ENCODE measurements at regions of chr7 and their contacts with region 1.

Region 1: DNA sequence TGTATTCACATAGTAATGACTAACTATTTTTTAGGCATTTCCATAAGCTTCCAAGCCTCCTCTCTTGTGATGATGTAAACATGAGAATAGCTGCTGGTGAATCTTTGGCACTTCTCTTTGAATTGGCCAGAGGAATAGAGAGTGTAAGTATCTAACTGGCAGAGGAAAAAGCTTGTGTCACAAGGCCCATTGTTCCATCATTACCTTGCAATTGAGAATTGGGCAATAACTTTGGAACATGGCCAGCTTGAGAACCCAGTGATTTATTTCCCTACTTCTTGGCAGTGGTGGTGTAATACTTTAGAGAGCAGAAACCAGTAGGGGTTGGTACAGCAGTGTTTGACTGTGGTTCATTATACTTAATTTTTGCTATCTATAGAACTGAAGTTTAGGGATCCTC is 12.0 kb downstream of the IFRD1 start:
- DNase-seq: peak; percentile 85 to 88 (median 85)
- H3K4me3 ChIP-seq: no peak overlapping the region
- H3K27ac ChIP-seq: no peak overlapping the region
- H3K4me1 ChIP-seq: peaks cover 0 to 9% (median 0%) of the 10 kb centered on the region in 4 experiments
- H3K27me3 ChIP-seq: no peaks in the 10 kb centered on the region

Region 2: DNA sequence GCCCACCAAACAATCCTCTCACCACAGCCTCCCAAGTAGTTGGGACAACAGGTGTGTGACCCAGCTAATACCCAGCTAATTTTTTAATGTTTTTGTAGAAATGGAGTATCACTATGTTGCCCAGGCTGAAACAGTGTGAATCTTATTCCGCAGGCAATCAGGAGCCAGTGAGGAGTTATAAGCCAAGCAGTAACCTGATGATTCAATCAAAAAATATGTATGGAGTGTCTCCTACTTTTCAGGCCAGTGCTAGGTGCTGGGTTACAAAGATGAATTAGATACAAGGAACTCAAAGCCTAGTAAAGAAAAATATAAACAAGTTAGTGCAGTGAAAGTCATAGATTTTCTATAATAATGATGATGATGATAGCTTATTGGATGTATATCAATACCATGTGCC is 25.2 kb before region 1 on chr7:
- CTCF ChIA-PET with region 1: no interaction called
- POLR2A ChIA-PET with region 1: no interaction called
- DNase-seq: no peak
- H3K4me3 ChIP-seq: no peak overlapping the region
- H3K27ac ChIP-seq: no peak overlapping the region
- H3K4me1 ChIP-seq: peaks cover 0 to 2% (median 0%) of the 10 kb centered on the region in 4 experiments
- H3K27me3 ChIP-seq: no peaks in the 10 kb centered on the region

Region 3: DNA sequence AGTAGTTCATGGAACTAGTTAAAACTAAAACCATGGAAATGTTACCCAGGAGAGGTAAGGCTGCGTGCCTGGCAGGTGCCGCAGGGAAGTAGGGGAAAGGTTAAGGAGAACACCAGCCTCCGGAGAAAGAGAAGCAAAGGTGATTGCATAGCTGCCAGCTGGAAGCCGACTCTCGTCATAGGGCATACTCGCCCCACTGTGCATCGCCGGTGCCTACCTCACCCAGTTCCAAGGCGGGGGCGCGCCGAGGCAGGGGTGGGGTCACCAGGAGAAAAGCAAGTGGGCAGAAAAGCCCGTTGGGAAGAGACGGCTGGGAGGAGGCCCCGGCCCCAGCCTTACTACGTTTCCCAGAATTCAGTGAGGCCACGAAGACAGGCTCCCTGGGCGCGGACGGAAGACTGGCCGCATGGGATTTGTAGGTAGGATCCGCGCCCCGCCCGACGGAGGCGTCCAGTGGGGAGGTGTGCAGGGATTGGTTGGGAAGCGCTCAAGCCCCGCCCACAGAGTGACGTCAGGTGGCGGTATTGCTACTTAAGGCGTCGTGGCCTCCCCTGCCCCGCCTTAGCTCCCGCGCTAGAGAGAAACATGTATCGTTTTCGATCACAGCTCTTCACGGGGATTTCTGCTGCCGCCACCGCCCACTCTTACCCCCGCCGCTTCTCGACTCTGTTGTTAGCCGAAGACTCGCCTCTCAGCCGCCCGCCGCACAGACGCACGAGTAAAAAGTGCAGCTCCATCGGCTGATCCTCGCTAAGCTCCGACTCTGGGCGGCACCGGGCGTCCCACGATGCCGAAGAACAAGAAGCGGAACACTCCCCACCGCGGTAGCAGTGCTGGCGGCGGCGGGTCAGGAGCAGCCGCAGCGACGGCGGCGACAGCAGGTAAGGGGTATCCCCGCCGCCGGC is 12.1 kb before region 1 on chr7 and contains the start of gene IFRD1:
- CTCF ChIA-PET with region 1: interaction called, 32 read pairs
- POLR2A ChIA-PET with region 1: interaction called, 10 read pairs
- DNase-seq: peak; percentile 97 to 99 (median 98)
- H3K4me3 ChIP-seq: peak within 1 kb of the TSS; percentile 93 to 100 (median 97)
- H3K27ac ChIP-seq: peak within 1 kb of the TSS; percentile 92 to 96
- H3K4me1 ChIP-seq: peaks cover 14 to 30% (median 23%) of the 10 kb centered on the region in 4 experiments
- H3K27me3 ChIP-seq: no peaks in the 10 kb centered on the region

Region 4: DNA sequence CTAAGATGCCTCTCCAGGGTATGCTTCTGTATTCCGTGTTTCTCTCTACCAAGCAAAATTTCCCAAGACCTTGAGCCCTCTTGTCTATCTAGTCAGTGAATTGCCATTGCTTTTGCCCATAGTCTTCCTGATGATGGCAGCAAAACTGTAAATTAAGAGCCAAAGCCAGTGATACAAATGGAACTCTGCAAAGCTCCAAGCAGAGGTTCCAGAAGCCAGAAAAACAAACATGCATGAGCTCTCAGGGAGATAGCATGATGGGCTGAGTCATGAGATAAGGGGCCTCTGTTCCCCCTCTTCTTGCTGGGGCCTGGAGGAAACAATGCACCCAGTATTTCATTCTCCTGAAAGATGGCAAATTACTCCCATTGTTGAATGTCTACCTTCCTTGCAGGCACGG is 43.3 kb after region 1 on chr7:
- CTCF ChIA-PET with region 1: no interaction called
- POLR2A ChIA-PET with region 1: no interaction called
- DNase-seq: no peak
- H3K4me3 ChIP-seq: no peak overlapping the region
- H3K27ac ChIP-seq: no peak overlapping the region
- H3K4me1 ChIP-seq: peaks cover 0 to 8% (median 0%) of the 10 kb centered on the region in 4 experiments
- H3K27me3 ChIP-seq: no peaks in the 10 kb centered on the region

Measured in common myeloid progenitor, CD34-positive (primary cell).